ENCODE measurements at regions of chr17 and their contacts with region 1.

Region 1: DNA sequence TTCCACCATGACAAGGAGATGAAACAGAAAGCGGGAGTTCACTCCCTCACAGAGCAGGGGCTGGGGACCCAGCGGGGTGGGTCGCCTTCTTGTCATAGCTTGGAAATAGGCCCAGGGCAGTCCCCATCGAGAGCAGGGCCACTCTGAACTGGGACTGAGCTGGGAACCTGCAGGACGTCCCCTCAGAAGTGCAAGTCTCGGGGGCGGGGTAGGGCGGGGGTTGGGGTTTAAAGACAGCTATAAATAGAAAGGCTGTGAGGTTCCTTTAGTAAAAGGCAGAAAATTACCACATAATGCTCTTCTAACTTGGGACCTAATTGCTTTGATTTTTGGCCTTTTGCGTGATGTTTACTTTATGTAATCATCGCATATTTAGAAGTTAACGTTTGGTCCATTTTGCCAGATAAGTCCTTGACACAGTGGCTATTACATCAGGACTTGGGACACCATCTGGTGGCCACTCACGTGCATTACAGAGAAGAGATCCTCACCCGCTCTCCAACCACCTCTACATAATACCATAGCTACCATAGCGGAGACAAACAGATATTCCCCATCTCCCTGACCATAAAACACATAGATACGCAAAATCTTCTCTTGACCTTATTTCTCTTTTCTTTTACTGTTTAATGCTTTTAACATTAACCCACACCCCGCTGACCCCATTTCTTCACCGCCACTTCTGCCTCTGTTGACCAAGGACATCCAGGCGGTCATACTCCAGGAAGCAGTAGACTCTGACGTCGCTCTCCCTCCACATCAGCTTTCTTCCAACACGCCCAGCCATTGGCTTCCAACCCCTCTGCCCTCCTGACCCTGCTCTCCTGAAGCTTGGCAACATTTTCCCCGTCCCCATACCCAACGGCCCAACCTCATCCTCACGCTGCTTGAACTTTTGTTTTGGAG is 27.5 kb upstream of the PIK3R6 start:
- DNase-seq: peak; percentile 69
- H3K4me3 Mint-ChIP-seq: no peak overlapping the region
- H3K27ac Mint-ChIP-seq: no peak overlapping the region
- H3K4me1 Mint-ChIP-seq: peaks cover 60% of the 10 kb centered on the region
- H3K27me3 Mint-ChIP-seq: no peaks in the 10 kb centered on the region

Region 2: GRCh38 chr17:8832711-8833352 is 62.1 kb before region 1 on chr17:
- CTCF ChIA-PET with region 1: no interaction called
- DNase-seq: peak; percentile 47
- H3K4me3 Mint-ChIP-seq: no peak overlapping the region
- H3K27ac Mint-ChIP-seq: no peak overlapping the region
- H3K4me1 Mint-ChIP-seq: no peaks in the 10 kb centered on the region
- H3K27me3 Mint-ChIP-seq: no peaks in the 10 kb centered on the region

Region 3: GRCh38 chr17:8865811-8866210 is 29.1 kb before region 1 on chr17:
- CTCF ChIA-PET with region 1: interaction called, 13 read pairs
- DNase-seq: no peak
- H3K4me3 Mint-ChIP-seq: no peak overlapping the region
- H3K27ac Mint-ChIP-seq: no peak overlapping the region
- H3K4me1 Mint-ChIP-seq: peaks cover 51% of the 10 kb centered on the region
- H3K27me3 Mint-ChIP-seq: peaks cover 22% of the 10 kb centered on the region

Region 4: GRCh38 chr17:8875957-8876356 is 19.0 kb before region 1 on chr17:
- CTCF ChIA-PET with region 1: no interaction called
- DNase-seq: no peak
- H3K4me3 Mint-ChIP-seq: no peak overlapping the region
- H3K27ac Mint-ChIP-seq: no peak overlapping the region
- H3K4me1 Mint-ChIP-seq: peaks cover 6% of the 10 kb centered on the region
- H3K27me3 Mint-ChIP-seq: peaks cover 3% of the 10 kb centered on the region

Region 5: GRCh38 chr17:9239793-9240658 is 345.1 kb after region 1 on chr17:
- CTCF ChIA-PET with region 1: no interaction called
- DNase-seq: peak; percentile 72
- H3K4me3 Mint-ChIP-seq: peak overlapping the region; percentile 66
- H3K27ac Mint-ChIP-seq: no peak overlapping the region
- H3K4me1 Mint-ChIP-seq: peaks cover 11% of the 10 kb centered on the region
- H3K27me3 Mint-ChIP-seq: peaks cover 30% of the 10 kb centered on the region